HCT116 (cell line): ENCODE measurements at regions of chr5 and their contacts with region 1.

Region 1: DNA sequence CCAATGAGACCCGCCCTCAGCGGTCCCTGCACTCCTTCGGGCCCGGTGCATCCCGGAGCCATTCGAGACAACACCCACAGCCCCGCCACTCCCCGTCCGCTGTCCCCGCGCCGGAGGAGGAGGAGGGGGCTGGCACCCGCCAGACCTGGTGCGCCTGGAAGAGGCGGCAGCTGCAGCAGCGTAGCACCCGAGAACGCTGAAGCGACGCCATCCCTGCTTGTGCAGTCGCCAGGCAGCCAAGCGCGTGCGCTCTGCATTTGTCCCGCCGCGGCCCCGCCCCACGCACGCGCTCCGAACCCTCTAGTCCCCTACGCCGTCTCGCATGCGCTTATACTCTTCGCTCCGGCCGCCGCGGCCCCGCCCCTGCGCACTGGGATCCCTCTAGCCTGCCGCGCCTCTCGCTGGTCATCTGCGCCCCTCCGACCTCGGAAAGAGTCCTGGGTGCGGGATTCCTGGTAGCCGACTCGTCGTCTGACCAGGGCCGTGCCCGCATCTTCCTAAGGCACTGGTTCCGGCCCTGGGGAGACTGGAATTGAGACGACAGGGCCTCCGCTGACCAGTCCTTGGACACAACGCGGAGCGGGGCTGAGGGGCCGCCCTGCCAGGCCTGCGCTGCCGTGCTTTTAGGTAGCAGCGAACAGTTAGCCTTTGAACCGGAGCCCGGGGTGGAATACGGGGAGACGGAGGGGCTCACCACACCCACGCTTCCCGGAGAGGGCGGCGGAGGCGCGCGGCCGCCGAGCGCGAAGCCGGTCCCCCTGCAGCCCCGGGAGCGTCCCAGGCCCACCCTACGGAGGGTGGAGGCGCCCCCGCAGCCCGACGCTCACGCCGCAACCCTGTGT is at the start of gene MRNIP:
- DNase-seq: peak; percentile 86
- ATAC-seq: peak; percentile 95
- H3K4me3 ChIP-seq: peak within 1 kb of the TSS; percentile 92 to 99
- H3K27ac ChIP-seq: peak within 1 kb of the TSS; percentile 73
- H3K4me1 ChIP-seq: peaks cover 2 to 12% of the 10 kb centered on the region in 2 experiments; a peak in 1 of 4 replicates
- H3K27me3 ChIP-seq: no peaks in the 10 kb centered on the region
- CTCF ChIP-seq: no peak
- POLR2A ChIP-seq: peak; percentile 89
- RAD21 ChIP-seq: 0 out of 2 replicates have a peak, but pooled peaks have one; percentile 9
- total RNA-seq, gene MRNIP: 36.2 TPM

Region 2: DNA sequence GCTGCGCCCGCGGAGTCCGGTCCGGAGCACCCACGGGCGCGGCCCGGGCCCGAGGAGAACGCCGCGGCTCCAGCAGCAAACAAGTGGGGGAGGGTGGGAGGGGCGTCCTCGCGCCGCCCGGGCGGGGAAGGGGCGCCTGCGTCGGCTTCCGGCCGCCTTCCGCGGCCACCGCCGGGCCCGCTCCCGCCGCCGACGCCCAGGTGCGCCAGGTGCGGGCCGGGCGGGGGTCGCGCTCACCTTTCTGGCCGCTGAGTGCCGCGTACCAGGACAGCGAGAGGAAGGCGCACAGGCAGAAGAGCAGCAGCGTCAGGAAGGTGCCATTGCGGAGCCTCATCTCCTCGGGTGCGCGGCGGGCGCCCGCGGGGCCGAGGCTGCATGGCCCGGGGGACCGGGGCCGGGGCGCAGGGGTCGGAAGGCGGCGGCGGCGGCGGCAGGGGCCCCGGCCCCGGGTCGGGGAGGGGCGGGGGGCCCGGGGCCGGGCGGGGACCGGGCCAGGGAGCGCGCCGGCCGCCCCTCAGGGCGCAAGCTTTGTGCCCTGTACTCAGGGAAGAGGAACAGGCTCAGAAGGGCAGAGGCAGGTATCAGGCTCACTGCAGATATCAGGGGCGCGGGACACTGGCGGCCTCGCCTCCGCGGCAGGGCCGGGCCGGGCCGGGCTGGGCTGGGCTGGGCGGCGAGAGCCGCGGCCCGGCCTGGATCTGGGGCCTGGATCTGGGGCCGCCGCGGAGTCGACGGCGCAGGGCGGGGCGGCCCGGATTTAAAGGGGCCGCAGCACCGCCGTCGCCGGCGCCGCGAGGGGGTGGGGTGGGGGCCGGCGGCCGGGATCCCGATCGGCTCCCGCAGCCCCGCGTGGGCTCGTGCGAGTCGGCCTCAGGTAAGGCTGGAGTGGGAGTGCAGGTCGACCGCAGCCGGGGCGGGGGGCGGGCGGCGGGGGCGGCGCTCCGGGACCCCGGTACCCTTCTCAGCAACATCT is 52.3 kb before region 1 on chr5 and contains the start of gene MGAT4B:
- CTCF ChIA-PET with region 1: no interaction called
- POLR2A ChIA-PET with region 1: no interaction called
- RAD21 ChIA-PET with region 1: no interaction called
- intact Hi-C with region 1: loop called (anchors 2 kb)
- DNase-seq: no peak
- ATAC-seq: peak; percentile 65
- H3K4me3 ChIP-seq: peak within 1 kb of the TSS; percentile 71 to 92
- H3K27ac ChIP-seq: peak within 1 kb of the TSS; percentile 99
- H3K4me1 ChIP-seq: peaks cover 38 to 58% of the 10 kb centered on the region in 2 experiments
- H3K27me3 ChIP-seq: no peaks in the 10 kb centered on the region
- CTCF ChIP-seq: no peak
- POLR2A ChIP-seq: peak; percentile 68
- RAD21 ChIP-seq: no peak
- total RNA-seq, gene MGAT4B: 148 TPM

Region 3: GRCh38 chr5:179821581-179822432 is 37.0 kb before region 1 on chr5:
- CTCF ChIA-PET with region 1: no interaction called
- POLR2A ChIA-PET with region 1: no interaction called
- RAD21 ChIA-PET with region 1: no interaction called
- intact Hi-C with region 1: loop called (anchors 2 kb)
- DNase-seq: peak; percentile 81
- ATAC-seq: peak; percentile 71
- H3K4me3 ChIP-seq: peak overlapping the region; percentile 76 to 87
- H3K27ac ChIP-seq: peak overlapping the region; percentile 99
- H3K4me1 ChIP-seq: peaks cover 35 to 57% of the 10 kb centered on the region in 2 experiments
- H3K27me3 ChIP-seq: no peaks in the 10 kb centered on the region
- CTCF ChIP-seq: no peak
- POLR2A ChIP-seq: peak; percentile 65
- RAD21 ChIP-seq: no peak

Region 4: GRCh38 chr5:179974946-179975712 is 116.3 kb after region 1 on chr5:
- CTCF ChIA-PET with region 1: no interaction called
- POLR2A ChIA-PET with region 1: no interaction called
- RAD21 ChIA-PET with region 1: no interaction called
- intact Hi-C with region 1: loop called (anchors 5 kb)
- DNase-seq: no peak
- ATAC-seq: peak; percentile 97
- H3K4me3 ChIP-seq: no peak overlapping the region
- H3K27ac ChIP-seq: no peak overlapping the region
- H3K4me1 ChIP-seq: no peaks in the 10 kb centered on the region
- H3K27me3 ChIP-seq: no peaks in the 10 kb centered on the region
- CTCF ChIP-seq: peak; percentile 22 to 68 (median 63); a peak in 4 of 6 replicates
- POLR2A ChIP-seq: no peak
- RAD21 ChIP-seq: peak; percentile 62

Region 5: GRCh38 chr5:180071531-180072255 is 212.9 kb after region 1 on chr5 and contains the start of gene RNF130:
- CTCF ChIA-PET with region 1: no interaction called
- POLR2A ChIA-PET with region 1: no interaction called
- RAD21 ChIA-PET with region 1: no interaction called
- intact Hi-C with region 1: loop called (anchors 5 kb)
- DNase-seq: peak; percentile 77
- ATAC-seq: peak; percentile 81
- H3K4me3 ChIP-seq: peak within 1 kb of the TSS; percentile 61 to 79
- H3K27ac ChIP-seq: peak within 1 kb of the TSS; percentile 79
- H3K4me1 ChIP-seq: peaks cover 6 to 25% of the 10 kb centered on the region in 2 experiments; a peak in 3 of 4 replicates
- H3K27me3 ChIP-seq: no peaks in the 10 kb centered on the region
- CTCF ChIP-seq: no peak
- POLR2A ChIP-seq: peak; percentile 45
- RAD21 ChIP-seq: no peak
- total RNA-seq, gene RNF130: 34.9 TPM